Activated CD4-positive, alpha-beta memory T cell treated with anti-CD3 and anti-CD28 coated beads for 36 hours (primary cell): ENCODE measurements at regions of chr12 and their contacts with region 1.

Region 1: DNA sequence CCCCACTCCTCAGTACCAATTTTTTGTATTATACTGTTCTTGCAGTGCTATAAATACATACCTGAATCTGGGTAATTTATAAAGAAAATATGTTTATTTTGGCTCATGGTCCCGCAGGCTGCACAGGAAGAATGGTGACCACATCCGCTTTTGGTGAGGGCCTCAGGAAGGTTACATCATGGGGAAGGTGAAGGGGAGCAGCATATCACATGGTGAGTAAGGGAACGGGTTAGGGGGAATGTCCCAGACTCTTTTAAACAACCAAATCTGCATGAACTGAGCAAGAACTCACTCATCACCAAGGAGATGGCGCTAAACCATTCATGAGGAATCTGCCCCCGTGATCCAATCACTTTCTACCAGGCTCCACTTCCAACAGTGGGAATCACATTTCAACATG is 40.0 kb downstream of the OSBPL8 start:
- DNase-seq: peak; percentile 54
- H3K4me3 Mint-ChIP-seq: no peak overlapping the region
- H3K27ac Mint-ChIP-seq: peak overlapping the region; percentile 71
- H3K4me1 Mint-ChIP-seq: peaks cover 39% of the 10 kb centered on the region
- H3K27me3 Mint-ChIP-seq: no peaks in the 10 kb centered on the region

Region 2: GRCh38 chr12:76489737-76490136 is 29.8 kb before region 1 on chr12:
- CTCF ChIA-PET with region 1: no interaction called
- POLR2A ChIA-PET with region 1: no interaction called
- intact Hi-C with region 1: loop called (anchors 5 kb)
- DNase-seq: no peak
- H3K4me3 Mint-ChIP-seq: no peak overlapping the region
- H3K27ac Mint-ChIP-seq: no peak overlapping the region
- H3K4me1 Mint-ChIP-seq: peaks cover 25% of the 10 kb centered on the region
- H3K27me3 Mint-ChIP-seq: no peaks in the 10 kb centered on the region

Region 3: DNA sequence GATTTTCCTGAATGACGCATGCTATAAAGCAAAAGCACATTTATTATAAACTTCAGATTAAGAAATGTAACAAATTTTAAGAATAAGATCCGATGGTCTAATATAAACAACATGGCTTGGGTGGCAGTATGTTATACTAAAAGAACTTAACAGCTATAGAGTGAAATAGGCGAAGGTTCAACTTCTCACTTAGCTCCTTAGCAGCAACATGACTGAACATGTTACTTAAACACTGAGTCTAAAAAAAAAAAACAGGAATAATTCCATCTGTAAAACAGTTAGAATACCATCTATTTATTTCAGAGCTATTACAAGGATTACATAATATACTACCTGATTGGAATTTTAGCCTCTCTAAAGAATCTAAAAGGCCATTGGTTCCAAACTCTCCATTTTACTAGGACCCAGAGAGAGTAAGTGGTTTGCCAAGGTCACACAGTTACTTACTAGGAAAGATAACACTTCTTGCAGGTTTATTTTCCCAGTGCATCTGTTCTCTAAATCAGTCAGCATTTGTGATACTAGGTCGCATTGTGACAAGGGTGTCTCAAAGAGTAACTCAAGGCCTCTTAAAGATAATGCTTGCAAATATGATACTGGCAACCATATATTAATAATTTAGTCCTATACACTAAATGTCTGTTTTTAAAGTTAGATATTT is 25.2 kb after region 1 on chr12:
- CTCF ChIA-PET with region 1: no interaction called
- POLR2A ChIA-PET with region 1: no interaction called
- intact Hi-C with region 1: no loop called
- DNase-seq: no peak
- H3K4me3 Mint-ChIP-seq: no peak overlapping the region
- H3K27ac Mint-ChIP-seq: no peak overlapping the region
- H3K4me1 Mint-ChIP-seq: peaks cover 66% of the 10 kb centered on the region
- H3K27me3 Mint-ChIP-seq: no peaks in the 10 kb centered on the region